ENCODE measurements at regions of chr14 and their contacts with region 1.

Region 1: GRCh38 chr14:22418631-22419030 is 170.4 kb downstream of the DAD1 start:
- DNase-seq: no peak
- ATAC-seq: peak; percentile 15
- H3K4me3 ChIP-seq: no peak overlapping the region
- H3K4me3 Mint-ChIP-seq: peak overlapping the region; percentile 11
- H3K27ac ChIP-seq: no peak overlapping the region
- H3K27ac Mint-ChIP-seq: no peak overlapping the region
- H3K4me1 ChIP-seq: peaks cover 24% of the 10 kb centered on the region in 2 donors
- H3K4me1 Mint-ChIP-seq: peaks cover 26% of the 10 kb centered on the region
- H3K27me3 ChIP-seq: no peaks in the 10 kb centered on the region
- H3K27me3 Mint-ChIP-seq: no peaks in the 10 kb centered on the region
- CTCF ChIP-seq: no peak

Region 2: GRCh38 chr14:22432348-22432976 is 13.8 kb after region 1 on chr14:
- CTCF ChIA-PET with region 1: interaction called, 8 read pairs
- POLR2A ChIA-PET with region 1: interaction called, 3 read pairs
- intact Hi-C with region 1: loop called (anchors 1 kb)
- DNase-seq: peak; percentile 48
- ATAC-seq: peak; percentile 83
- H3K4me3 ChIP-seq: no peak overlapping the region
- H3K4me3 Mint-ChIP-seq: peak overlapping the region; percentile 55
- H3K27ac ChIP-seq: no peak overlapping the region
- H3K27ac Mint-ChIP-seq: peak overlapping the region; percentile 39
- H3K4me1 ChIP-seq: peaks cover 25 to 29% of the 10 kb centered on the region in 2 donors
- H3K4me1 Mint-ChIP-seq: peaks cover 35% of the 10 kb centered on the region
- H3K27me3 ChIP-seq: peaks cover 0 to 37% (median 21%) of the 10 kb centered on the region in 4 experiments
- H3K27me3 Mint-ChIP-seq: peaks cover 24% of the 10 kb centered on the region
- CTCF ChIP-seq: no peak

Measured in B cell (primary cell).